ENCODE measurements at regions of chr2 and their contacts with region 1.

Region 1: GRCh38 chr2:16608661-16609643 is 56.7 kb downstream of the CYRIA start:
- DNase-seq: peak; percentile 72 to 91 (median 84)
- ATAC-seq: peak; percentile 94
- H3K4me3 ChIP-seq: peak overlapping the region; percentile 78
- H3K4me3 Mint-ChIP-seq: peak overlapping the region; percentile 79 to 97 (median 90)
- H3K27ac ChIP-seq: peak overlapping the region; percentile 36
- H3K27ac Mint-ChIP-seq: peak overlapping the region; percentile 41 to 90 (median 78)
- H3K4me1 ChIP-seq: no peaks in the 10 kb centered on the region
- H3K4me1 Mint-ChIP-seq: peaks cover 0 to 4% (median 0%) of the 10 kb centered on the region in 7 donors
- H3K27me3 ChIP-seq: no peaks in the 10 kb centered on the region
- H3K27me3 Mint-ChIP-seq: peaks cover under 1 to 6% (median under 1%) of the 10 kb centered on the region in 5 donors

Region 2: GRCh38 chr2:16525265-16525887 is 83.6 kb before region 1 on chr2:
- CTCF ChIA-PET with region 1: no interaction called
- POLR2A ChIA-PET with region 1: no interaction called
- intact Hi-C with region 1: loop called in 1 of 2 experiments (anchors 1 kb)
- DNase-seq: peak in 1 of 9 donors; percentile 26
- ATAC-seq: peak; percentile 40
- H3K4me3 ChIP-seq: no peak overlapping the region
- H3K4me3 Mint-ChIP-seq: no peak overlapping the region
- H3K27ac ChIP-seq: no peak overlapping the region
- H3K27ac Mint-ChIP-seq: no peak overlapping the region
- H3K4me1 ChIP-seq: no peaks in the 10 kb centered on the region
- H3K4me1 Mint-ChIP-seq: peaks cover 0 to 2% (median 0%) of the 10 kb centered on the region in 7 donors
- H3K27me3 ChIP-seq: no peaks in the 10 kb centered on the region
- H3K27me3 Mint-ChIP-seq: peaks cover 4 to 23% (median 15%) of the 10 kb centered on the region in 5 donors

Region 3: DNA sequence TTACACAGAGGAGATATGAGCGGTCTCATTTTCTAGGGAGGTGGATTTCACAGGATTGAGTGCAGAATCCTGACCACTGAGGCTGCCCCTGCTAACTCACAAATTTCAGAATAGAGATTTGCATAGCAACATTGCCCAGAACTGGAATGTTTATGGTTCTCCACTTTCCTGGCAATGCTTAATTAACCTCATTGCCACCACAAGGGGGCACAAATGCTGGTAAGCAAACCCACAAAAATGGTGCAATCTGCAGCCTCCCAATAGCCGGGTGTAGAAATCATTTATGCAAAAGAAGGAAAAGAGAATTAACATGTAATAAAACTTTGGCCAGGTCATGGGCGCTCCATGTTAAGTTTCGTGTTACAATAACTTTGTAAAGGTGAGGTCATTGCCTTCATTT is 55.7 kb before region 1 on chr2:
- CTCF ChIA-PET with region 1: no interaction called
- POLR2A ChIA-PET with region 1: no interaction called
- intact Hi-C with region 1: loop called (anchors 1 kb)
- DNase-seq: peak in 6 of 9 donors; percentile 2 to 33 (median 17)
- ATAC-seq: no peak
- H3K4me3 ChIP-seq: no peak overlapping the region
- H3K4me3 Mint-ChIP-seq: no peak overlapping the region
- H3K27ac ChIP-seq: no peak overlapping the region
- H3K27ac Mint-ChIP-seq: no peak overlapping the region
- H3K4me1 ChIP-seq: no peaks in the 10 kb centered on the region
- H3K4me1 Mint-ChIP-seq: no peaks in the 10 kb centered on the region
- H3K27me3 ChIP-seq: no peaks in the 10 kb centered on the region
- H3K27me3 Mint-ChIP-seq: peaks cover 0 to 24% (median 7%) of the 10 kb centered on the region in 5 donors

Region 4: GRCh38 chr2:17000184-17000482 is 391.2 kb after region 1 on chr2:
- CTCF ChIA-PET with region 1: no interaction called
- POLR2A ChIA-PET with region 1: no interaction called
- intact Hi-C with region 1: no loop called
- DNase-seq: no peak
- ATAC-seq: no peak
- H3K4me3 ChIP-seq: no peak overlapping the region
- H3K4me3 Mint-ChIP-seq: no peak overlapping the region
- H3K27ac ChIP-seq: no peak overlapping the region
- H3K27ac Mint-ChIP-seq: no peak overlapping the region
- H3K4me1 ChIP-seq: no peaks in the 10 kb centered on the region
- H3K4me1 Mint-ChIP-seq: no peaks in the 10 kb centered on the region
- H3K27me3 ChIP-seq: no peaks in the 10 kb centered on the region
- H3K27me3 Mint-ChIP-seq: no peaks in the 10 kb centered on the region